Right cardiac atrium (tissue), 5 donors: ENCODE measurements at regions of chr18 and their contacts with region 1.

Region 1: DNA sequence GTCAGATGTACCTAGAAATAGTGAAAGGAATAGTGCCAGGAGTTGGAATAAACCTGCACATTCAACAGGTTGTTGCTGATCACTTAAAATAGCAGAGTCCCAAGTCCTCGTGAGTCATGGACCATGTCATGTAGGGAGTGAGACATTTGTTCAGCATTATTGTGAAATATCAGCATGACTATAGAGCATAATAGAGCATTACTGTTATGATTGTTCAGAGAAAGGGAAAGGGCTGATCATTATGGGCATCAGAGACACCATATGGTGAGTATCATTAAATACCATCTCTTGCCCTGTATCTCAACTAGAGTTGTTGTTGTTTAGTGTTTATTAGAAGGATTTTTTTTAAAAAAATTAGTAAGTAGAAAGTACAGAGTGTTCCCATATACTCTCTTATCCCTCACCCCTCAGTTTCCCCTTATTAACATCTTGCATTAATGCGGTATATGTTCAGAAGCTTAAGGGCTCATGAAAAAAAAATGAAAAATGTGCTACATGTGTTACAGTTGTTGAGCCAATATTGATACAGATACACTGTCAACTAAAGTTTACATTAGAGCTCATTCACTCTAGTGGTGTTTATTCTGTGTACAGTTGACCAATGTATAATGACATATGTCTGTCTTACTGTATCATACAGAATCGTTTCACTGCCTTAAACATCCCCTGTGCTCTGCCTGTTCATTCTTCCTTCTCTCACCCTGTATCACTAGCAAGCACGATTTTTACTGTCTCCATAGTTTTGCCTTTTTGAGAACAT is 5.7 kb downstream of the ELAC1 start:
- DNase-seq: no peak
- ATAC-seq: peak; percentile 42 to 69
- H3K4me3 ChIP-seq: no peak overlapping the region
- H3K27ac ChIP-seq: no peak overlapping the region
- H3K4me1 ChIP-seq: peaks cover 4% of the 10 kb centered on the region
- H3K27me3 ChIP-seq: no peaks in the 10 kb centered on the region

Region 2: GRCh38 chr18:50610349-50610748 is 363.2 kb before region 1 on chr18:
- intact Hi-C with region 1: no loop called
- DNase-seq: no peak
- ATAC-seq: no peak
- H3K4me3 ChIP-seq: no peak overlapping the region
- H3K27ac ChIP-seq: no peak overlapping the region
- H3K4me1 ChIP-seq: peaks cover 5% of the 10 kb centered on the region
- H3K27me3 ChIP-seq: no peaks in the 10 kb centered on the region

Region 3: GRCh38 chr18:51029694-51030536 is 56.4 kb after region 1 on chr18 and contains the start of gene SMAD4:
- intact Hi-C with region 1: loop called in 1 of 4 experiments (anchors 10 kb)
- DNase-seq: peak; percentile 96 to 99 (median 98)
- ATAC-seq: peak; percentile 97 to 98
- H3K4me3 ChIP-seq: peak within 1 kb of the TSS; percentile 84
- H3K27ac ChIP-seq: peak within 1 kb of the TSS; percentile 99
- H3K4me1 ChIP-seq: peaks cover 6% of the 10 kb centered on the region
- H3K27me3 ChIP-seq: no peaks in the 10 kb centered on the region
- total RNA-seq, gene SMAD4: 85.8 to 98.2 (median 92.7) TPM

Region 4: GRCh38 chr18:51135795-51136194 is 162.2 kb after region 1 on chr18:
- intact Hi-C with region 1: no loop called
- DNase-seq: no peak
- ATAC-seq: no peak
- H3K4me3 ChIP-seq: no peak overlapping the region
- H3K27ac ChIP-seq: no peak overlapping the region
- H3K4me1 ChIP-seq: no peaks in the 10 kb centered on the region
- H3K27me3 ChIP-seq: no peaks in the 10 kb centered on the region